Activated CD8-positive, alpha-beta memory T cell treated with anti-CD3 and anti-CD28 coated beads, Interleukin-2, amount 10 ng/mL, durations not matched to agents 7 days and 5 days (primary cell): ENCODE measurements at regions of chr1 and their contacts with region 1.

Region 1: GRCh38 chr1:175319418-175320230 is 127.0 kb upstream of the KIAA0040 start:
- DNase-seq: peak; percentile 78
- ATAC-seq: peak; percentile 93
- H3K4me3 Mint-ChIP-seq: no peak overlapping the region
- H3K27ac Mint-ChIP-seq: no peak overlapping the region
- H3K4me1 Mint-ChIP-seq: peaks cover 6% of the 10 kb centered on the region
- H3K27me3 Mint-ChIP-seq: peaks cover 6% of the 10 kb centered on the region

Region 2: GRCh38 chr1:175307160-175307559 is 12.5 kb before region 1 on chr1:
- CTCF ChIA-PET with region 1: interaction called, 15 read pairs
- DNase-seq: no peak
- ATAC-seq: no peak
- H3K4me3 Mint-ChIP-seq: no peak overlapping the region
- H3K27ac Mint-ChIP-seq: no peak overlapping the region
- H3K4me1 Mint-ChIP-seq: no peaks in the 10 kb centered on the region
- H3K27me3 Mint-ChIP-seq: peaks cover 19% of the 10 kb centered on the region